Dorsolateral prefrontal cortex (tissue), 120 donors: ENCODE measurements at regions of chr11 and their contacts with region 1.

Region 1: DNA sequence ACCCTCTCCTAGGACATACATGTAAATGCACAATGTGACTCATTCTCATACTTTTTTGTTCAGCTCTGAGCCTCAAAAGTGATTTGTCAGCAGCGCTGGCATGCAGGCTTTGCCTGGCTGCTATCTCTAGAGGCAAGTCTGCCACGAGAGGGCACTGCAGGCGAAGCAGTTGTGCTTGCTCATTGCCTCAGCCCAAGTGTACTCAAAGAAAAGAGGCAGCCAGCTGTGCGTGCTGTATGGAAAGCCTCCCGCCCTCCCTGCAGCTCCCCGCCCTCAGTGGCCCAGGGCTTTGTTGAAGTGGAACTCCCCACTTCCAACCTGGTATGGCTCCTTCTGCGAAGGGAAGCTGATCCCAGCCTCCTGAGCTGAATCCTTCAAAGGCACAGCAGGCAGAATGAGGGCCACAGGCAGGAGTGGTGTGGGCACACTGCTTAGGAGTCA is 16.3 kb downstream of the SDHAF2 start:
- DNase-seq: peak; percentile 71 to 98 (median 94)
- H3K4me3 ChIP-seq: peak overlapping the region in 1 of 59 donors; percentile 22
- H3K27ac ChIP-seq: peak overlapping the region in 57 of 59 donors; percentile 53 to 98 (median 86)
- H3K27me3 ChIP-seq: no peaks in the 10 kb centered on the region
- CTCF ChIP-seq: peak; percentile 65 to 96 (median 90)

Region 2: GRCh38 chr11:61581030-61581928 is 135.0 kb after region 1 on chr11 and contains the start of gene SYT7:
- intact Hi-C with region 1: loop called in 1 of 2 experiments (anchors 5 kb)
- DNase-seq: peak; percentile 87 to 95 (median 93)
- H3K4me3 ChIP-seq: peak within 1 kb of the TSS; percentile 37 to 77 (median 63)
- H3K27ac ChIP-seq: peak within 1 kb of the TSS in 51 of 59 donors; percentile 31 to 89 (median 72)
- H3K27me3 ChIP-seq: peaks cover 0 to 14% (median 0%) of the 10 kb centered on the region in 45 donors
- CTCF ChIP-seq: peak in 41 of 56 donors; percentile 7 to 61 (median 34)
- total RNA-seq, gene SYT7: 52.2 to 249 (median 173) TPM